Left ventricle myocardium superior (tissue), 1 donor: ENCODE measurements at regions of chr1 and their contacts with region 1.

Region 1: DNA sequence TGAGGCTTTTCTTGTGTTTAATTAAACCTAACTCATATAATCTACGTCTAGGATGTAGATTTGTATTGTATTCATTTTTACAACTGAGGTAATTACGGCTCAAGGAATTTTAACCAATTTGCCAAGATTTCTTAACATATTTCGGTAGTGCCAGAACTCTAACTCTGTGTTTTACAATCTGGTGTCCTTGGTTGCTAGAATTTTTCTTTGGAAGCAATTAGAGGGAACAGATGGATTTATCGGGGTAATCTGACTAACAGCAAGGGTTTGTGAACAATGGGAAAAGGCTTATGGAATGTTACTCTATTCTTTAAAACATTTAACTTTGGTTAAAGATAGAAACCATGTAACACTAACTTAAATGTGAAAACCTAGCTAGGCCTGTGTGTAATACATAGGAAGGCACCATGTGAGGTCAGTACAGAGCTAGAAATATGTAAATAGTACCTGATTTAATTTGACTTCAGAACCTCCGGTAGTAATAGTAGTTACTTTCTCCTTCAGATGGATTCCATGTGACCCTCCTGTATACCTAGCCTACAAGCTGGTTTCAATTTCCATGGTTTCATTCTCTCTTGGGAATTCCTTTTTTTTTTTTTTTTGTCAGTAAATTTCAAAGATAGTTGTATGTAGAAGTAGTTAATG is 1.2 kb downstream of the MTF2 start:
- DNase-seq: no peak
- ATAC-seq: peak; percentile 45

Region 2: DNA sequence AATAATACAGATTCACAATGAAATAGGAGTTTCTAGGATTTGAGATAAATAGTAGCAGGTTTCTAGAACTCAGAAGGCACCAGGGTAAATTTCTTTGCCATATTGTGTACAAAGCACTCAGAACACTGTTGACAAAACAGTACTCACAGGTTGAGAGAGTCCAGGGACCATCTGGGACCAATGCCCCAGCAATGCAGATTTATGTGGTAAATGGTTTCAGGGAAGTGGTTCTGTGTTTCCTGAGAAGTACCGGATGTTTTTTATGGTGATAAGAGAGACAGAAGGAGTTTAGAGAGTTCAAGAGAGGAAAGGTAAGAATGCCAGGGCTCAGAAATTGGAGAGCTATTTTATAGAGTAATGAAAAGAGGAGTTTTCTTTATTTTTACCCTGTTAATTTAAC is 89.5 kb before region 1 on chr1:
- intact Hi-C with region 1: no loop called
- DNase-seq: no peak
- ATAC-seq: no peak

Region 3: GRCh38 chr1:93021539-93022134 is 58.7 kb before region 1 on chr1:
- intact Hi-C with region 1: no loop called
- DNase-seq: no peak
- ATAC-seq: no peak

Region 4: DNA sequence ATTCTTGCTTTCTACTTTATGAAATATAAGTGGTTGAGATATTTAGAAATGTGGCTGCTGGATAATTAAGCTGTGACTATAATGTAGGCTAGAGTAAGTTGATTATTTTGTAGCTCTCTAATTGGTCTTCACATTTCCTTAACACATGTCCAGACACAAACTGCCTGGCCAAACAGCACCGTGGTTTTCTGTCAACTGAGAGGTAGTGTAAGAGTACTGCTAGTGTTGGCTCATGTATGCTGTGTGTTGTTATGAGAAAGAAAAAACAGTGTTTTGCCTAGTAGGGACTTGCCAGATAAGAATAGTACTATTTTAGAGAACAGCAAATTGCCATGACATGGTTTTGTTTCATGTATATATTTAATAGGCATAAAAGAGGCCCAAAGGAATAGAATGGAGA is 62.8 kb after region 1 on chr1:
- intact Hi-C with region 1: no loop called
- DNase-seq: no peak
- ATAC-seq: no peak

Region 5: DNA sequence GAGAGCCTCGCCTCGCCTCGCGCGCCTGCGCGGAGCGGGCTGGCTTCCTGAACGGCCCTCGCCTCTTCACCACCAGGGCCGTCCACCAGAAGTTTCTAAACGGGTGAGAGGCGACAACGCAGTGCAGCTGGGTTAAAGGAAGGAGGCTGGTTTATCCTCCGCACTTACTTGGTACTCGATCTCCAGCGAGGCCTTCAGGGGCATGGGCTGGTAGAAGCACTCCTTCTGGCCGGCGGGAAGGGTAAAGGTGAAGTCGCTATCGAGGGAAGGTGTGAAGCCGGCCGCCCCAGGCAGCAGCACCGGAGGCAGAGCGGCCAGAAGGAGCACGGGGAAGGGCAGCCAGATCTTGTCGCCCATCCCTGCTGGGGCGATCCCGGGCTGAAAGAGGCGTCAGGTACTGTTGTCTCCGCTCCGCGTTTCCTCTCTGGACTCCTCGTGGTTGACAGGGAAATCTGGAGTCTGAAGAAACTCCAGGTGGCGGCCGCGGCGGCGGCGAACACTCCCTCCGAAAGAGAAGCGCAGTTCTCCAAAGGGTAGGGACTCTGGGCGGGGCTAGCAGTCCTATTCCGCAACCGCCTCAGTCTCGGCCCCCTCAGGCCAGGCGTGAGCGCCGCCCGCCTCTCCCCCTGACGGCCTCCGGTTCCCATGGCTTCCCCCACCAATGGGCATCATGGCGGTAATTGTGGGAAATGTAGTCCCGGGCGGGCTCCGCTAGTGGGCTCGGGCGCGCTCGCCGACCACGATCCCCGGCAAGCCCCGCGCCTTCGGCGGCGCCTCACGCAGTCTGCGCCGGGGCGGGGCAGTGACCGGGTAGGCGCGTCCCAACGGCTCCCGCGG is 99.8 kb after region 1 on chr1 and contains the start of gene TMED5:
- intact Hi-C with region 1: loop called (anchors 10 kb)
- DNase-seq: peak; percentile 98
- ATAC-seq: peak; percentile 98
- total RNA-seq, gene TMED5: 54.8 TPM